Natural killer cell (primary cell): ENCODE measurements at regions of chr16 and their contacts with region 1.

Region 1: DNA sequence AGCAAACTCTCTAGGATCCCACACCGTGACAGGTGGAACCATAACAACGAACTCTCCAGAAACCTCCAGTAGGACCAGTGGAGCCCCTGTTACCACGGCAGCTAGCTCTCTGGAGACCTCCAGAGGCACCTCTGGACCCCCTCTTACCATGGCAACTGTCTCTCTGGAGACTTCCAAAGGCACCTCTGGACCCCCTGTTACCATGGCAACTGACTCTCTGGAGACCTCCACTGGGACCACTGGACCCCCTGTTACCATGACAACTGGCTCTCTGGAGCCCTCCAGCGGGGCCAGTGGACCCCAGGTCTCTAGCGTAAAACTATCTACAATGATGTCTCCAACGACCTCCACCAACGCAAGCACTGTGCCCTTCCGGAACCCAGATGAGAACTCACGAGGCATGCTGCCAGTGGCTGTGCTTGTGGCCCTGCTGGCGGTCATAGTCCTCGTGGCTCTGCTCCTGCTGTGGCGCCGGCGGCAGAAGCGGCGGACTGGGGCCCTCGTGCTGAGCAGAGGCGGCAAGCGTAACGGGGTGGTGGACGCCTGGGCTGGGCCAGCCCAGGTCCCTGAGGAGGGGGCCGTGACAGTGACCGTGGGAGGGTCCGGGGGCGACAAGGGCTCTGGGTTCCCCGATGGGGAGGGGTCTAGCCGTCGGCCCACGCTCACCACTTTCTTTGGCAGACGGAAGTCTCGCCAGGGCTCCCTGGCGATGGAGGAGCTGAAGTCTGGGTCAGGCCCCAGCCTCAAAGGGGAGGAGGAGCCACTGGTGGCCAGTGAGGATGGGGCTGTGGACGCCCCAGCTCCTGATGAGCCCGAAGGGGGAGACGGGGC is 1.3 kb downstream of the SPN start:
- DNase-seq: peak; percentile 47 to 70
- ATAC-seq: peak; percentile 21 to 48 (median 38)
- H3K4me3 ChIP-seq: peak overlapping the region; percentile 90
- H3K4me3 Mint-ChIP-seq: peak overlapping the region; percentile 99
- H3K27ac ChIP-seq: peak overlapping the region; percentile 81
- H3K27ac Mint-ChIP-seq: peak overlapping the region; percentile 92 to 99
- H3K4me1 ChIP-seq: peaks cover 82% of the 10 kb centered on the region
- H3K4me1 Mint-ChIP-seq: peaks cover 55 to 82% of the 10 kb centered on the region in 2 donors
- H3K27me3 ChIP-seq: no peaks in the 10 kb centered on the region
- H3K27me3 Mint-ChIP-seq: no peaks in the 10 kb centered on the region
- CTCF ChIP-seq: no peak

Region 2: DNA sequence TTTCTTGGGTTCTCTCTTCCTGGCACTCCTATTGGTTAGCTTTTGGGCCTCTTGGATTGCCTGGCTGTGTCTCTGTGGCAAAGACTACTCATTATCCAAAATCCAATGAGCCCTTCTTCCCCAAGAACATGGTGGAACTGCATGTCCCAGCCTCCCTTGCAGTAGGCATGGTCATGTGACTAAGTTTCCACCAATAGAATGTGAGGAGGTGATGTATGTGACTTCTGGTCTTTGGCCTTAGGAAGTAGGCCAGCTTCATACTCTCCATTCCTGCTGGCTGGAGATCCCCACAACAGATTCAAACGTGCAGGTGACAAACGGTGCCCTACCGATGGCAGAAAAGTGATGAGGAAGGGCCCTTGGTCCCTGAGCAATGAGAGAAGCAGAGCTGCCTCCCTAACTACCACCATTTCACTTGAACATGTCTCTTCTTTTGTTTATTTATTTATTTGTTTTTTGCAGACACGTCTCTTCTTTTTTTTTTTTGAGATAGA is 18.6 kb before region 1 on chr16:
- intact Hi-C with region 1: loop called (anchors 1 kb)
- DNase-seq: peak in 1 of 2 donors; percentile 32
- ATAC-seq: no peak
- H3K4me3 ChIP-seq: no peak overlapping the region
- H3K4me3 Mint-ChIP-seq: no peak overlapping the region
- H3K27ac ChIP-seq: peak overlapping the region; percentile 59
- H3K27ac Mint-ChIP-seq: peak overlapping the region; percentile 65 to 73
- H3K4me1 ChIP-seq: peaks cover 35% of the 10 kb centered on the region
- H3K4me1 Mint-ChIP-seq: peaks cover 31 to 36% of the 10 kb centered on the region in 2 donors
- H3K27me3 ChIP-seq: no peaks in the 10 kb centered on the region
- H3K27me3 Mint-ChIP-seq: no peaks in the 10 kb centered on the region
- CTCF ChIP-seq: no peak